AG04449 (cell line): ENCODE measurements at regions of chr10 and their contacts with region 1.

Region 1: DNA sequence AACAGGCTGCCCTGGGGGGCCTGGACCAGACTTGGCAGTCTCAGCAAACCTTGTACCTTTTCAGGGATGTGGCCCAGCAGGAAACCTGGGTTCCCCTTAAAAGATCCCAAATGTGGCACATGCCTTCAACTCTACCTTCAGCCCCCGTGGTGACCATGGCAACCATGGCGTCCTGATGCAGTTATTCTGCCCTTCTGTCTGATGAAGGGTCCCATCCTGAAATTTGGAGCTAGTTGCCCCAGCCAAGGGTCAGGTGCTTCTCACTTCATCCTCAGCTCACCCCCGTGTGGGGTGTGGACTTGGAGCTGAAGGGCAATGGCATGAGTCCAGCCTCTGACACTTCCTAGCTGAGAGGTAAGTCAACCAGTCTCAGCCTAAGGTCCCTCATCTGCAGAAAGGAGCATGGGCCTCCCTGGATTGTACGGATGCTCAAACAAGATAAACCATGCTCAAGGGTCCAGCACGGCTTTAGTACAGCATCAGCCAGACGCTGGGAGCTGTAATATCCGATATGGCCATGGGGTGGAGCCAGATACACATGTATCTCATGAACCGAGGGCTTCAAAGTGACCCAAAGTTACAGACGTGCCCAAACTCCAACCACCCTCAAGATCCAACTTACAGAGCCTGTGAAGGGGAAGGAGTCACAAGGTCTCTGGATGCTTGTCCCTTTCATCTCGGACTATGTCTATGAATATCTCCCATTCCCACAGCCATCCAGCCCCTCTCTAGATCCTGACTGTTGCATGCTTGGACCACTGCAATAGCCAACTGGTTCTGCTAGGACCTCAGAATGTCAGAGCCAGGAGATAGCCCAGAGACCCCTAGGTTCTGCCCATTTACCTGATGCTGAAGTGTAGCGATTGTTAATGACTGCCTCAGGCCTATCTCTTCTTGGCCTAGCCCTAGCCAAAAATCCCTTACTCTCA is 142.5 kb downstream of the SH3PXD2A start:
- DNase-seq: no peak
- H3K4me3 ChIP-seq: no peak overlapping the region
- CTCF ChIP-seq: peak; percentile 79

Region 2: GRCh38 chr10:103278862-103279298 is 434.0 kb before region 1 on chr10:
- CTCF ChIA-PET with region 1: no interaction called
- POLR2A ChIA-PET with region 1: no interaction called
- DNase-seq: no peak
- H3K4me3 ChIP-seq: no peak overlapping the region
- CTCF ChIP-seq: no peak

Region 3: DNA sequence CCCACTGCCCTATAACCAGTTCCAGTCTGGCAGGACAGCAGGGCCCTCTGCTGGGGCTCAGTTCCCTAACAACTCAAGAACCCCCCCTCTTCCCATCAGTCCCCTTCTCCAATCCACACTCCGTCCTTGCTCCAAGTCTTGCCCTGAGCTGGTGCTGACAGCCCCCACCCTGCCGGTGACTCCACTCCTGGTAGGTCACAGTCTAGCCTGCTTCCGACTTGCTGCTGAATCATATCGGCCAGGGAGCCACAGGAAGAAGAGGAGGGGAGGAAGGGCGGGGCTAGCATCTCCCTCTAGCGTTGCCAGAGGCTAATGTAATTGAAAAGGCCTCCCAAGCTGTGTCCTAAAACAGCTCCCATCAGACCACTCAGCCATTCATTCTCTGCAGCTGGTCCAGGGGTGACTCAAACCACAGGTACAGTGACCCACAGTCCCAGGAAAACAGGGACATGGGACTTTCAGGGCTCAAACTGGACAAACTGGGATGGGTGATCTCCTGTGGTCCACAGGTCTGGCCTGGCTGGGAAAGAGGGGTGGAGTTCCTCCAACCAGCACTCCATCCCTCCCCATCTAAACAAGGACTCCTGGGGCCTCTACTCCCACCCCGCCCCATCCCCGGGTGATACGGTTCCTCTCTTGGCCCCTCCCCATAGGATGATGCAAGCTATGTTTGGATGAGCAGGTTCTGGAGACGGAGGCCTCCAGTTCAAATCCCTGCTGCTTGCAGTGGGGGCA is 16.3 kb before region 1 on chr10:
- CTCF ChIA-PET with region 1: interaction called, 79 read pairs
- POLR2A ChIA-PET with region 1: interaction called, 4 read pairs
- DNase-seq: peak; percentile 75
- H3K4me3 ChIP-seq: no peak overlapping the region
- CTCF ChIP-seq: peak; percentile 68

Region 4: DNA sequence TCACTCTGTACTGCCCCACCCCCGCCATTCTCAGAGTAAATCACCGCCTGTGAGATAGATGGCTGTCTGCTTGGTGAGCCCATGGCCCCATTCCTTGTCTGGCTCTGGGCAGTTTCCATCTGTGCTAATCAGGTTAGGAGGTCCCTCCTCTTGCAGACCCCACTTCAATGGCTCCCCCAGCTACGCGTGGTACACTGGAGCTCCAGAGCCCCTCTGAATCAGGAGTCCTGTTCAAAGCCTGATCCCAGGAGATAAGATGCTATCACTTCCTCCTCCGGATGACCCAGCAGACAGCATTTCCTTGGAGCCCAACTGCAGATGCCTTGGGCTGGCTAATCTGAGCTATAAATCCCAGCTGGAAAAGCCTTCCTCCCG is 20.2 kb after region 1 on chr10:
- CTCF ChIA-PET with region 1: interaction called, 14 read pairs
- POLR2A ChIA-PET with region 1: no interaction called
- DNase-seq: no peak
- H3K4me3 ChIP-seq: no peak overlapping the region
- CTCF ChIP-seq: no peak

Region 5: GRCh38 chr10:103870516-103870915 is 157.7 kb after region 1 on chr10:
- CTCF ChIA-PET with region 1: interaction called, 58 read pairs
- POLR2A ChIA-PET with region 1: interaction called, 3 read pairs
- DNase-seq: no peak
- H3K4me3 ChIP-seq: no peak overlapping the region
- CTCF ChIP-seq: peak; percentile 3